ENCODE measurements at regions of chr1 and their contacts with region 1.

Region 1: GRCh38 chr1:241627453-241628259 is 12.5 kb downstream of the CHML start:
- DNase-seq: peak in 2 of 5 donors; percentile 51 to 70
- H3K4me3 ChIP-seq: no peak overlapping the region
- H3K27ac ChIP-seq: no peak overlapping the region
- H3K4me1 ChIP-seq: no peaks in the 10 kb centered on the region
- H3K27me3 ChIP-seq: no peaks in the 10 kb centered on the region
- CTCF ChIP-seq: peak; percentile 41

Region 2: DNA sequence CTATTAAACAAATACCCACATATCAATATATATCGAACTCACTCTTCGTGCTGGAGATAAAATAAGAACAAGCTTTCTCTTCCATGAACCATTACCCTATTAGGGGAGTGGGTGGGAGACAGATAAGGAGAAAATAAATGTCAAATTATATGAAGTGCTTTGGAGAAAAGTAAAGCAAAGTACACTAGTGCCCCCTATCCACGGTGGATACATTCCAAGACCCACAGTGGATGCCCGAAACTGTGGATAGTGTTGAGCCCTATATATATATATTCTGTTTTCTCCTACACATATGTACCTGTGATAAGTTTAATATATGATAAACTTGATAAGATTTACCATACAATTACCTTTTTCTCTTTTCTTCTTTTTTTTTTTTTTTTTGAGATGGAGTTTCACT is 162.7 kb before region 1 on chr1:
- intact Hi-C with region 1: no loop called
- DNase-seq: no peak
- H3K4me3 ChIP-seq: no peak overlapping the region
- H3K27ac ChIP-seq: no peak overlapping the region
- H3K4me1 ChIP-seq: no peaks in the 10 kb centered on the region
- H3K27me3 ChIP-seq: no peaks in the 10 kb centered on the region
- CTCF ChIP-seq: no peak

Region 3: DNA sequence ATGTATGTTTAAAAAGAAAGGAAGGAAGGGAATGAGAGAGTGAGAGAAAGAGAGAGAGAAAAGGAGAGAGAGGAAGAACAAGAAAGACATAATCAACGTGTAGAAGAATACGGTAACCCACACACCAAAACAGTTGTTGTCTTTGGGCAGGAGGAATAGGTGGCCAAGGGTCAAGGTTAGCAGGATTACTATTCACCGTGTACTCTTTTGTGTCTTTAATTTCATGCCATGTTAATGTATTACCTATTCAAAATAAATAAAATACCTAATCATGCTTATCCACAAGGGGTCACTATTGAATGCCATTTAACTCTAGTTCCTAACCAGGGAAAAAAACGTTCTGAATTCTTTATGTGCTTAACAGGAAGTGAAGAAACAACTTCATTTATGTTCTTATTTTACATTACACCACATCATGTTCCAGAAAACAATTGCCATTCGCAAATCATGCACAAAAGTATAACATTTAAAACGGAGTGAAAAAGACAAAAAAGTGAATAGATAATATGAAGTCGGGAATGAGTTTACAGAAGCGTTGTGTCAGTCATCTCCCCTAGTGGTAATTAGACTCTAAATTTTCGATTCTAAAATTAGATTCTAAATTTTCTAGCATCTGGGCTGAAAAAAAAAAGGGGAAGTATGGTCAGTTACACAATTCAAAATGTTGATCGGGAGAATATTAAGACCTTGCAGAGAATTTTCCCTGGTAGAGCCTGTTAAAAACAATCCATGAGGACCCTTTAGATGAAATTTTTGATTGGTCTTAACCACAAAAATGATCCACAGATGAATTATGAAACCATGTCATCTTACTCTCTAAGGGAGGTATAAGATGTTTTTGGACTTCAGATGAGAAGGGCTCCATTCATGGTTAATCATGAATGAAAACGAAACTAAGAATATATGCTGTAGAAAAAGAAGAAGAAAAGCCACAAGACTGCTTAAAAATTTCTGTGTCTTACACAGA is 96.2 kb before region 1 on chr1:
- intact Hi-C with region 1: loop called (anchors 10 kb)
- DNase-seq: peak in 2 of 5 donors; percentile 82 to 85
- H3K4me3 ChIP-seq: peak overlapping the region; percentile 76 to 95 (median 77)
- H3K27ac ChIP-seq: peak overlapping the region; percentile 42 to 55
- H3K4me1 ChIP-seq: peaks cover 0 to 2% (median 0%) of the 10 kb centered on the region in 3 donors
- H3K27me3 ChIP-seq: no peaks in the 10 kb centered on the region
- CTCF ChIP-seq: peak; percentile 51